ENCODE measurements at regions of chr6 and their contacts with region 1.

Region 1: DNA sequence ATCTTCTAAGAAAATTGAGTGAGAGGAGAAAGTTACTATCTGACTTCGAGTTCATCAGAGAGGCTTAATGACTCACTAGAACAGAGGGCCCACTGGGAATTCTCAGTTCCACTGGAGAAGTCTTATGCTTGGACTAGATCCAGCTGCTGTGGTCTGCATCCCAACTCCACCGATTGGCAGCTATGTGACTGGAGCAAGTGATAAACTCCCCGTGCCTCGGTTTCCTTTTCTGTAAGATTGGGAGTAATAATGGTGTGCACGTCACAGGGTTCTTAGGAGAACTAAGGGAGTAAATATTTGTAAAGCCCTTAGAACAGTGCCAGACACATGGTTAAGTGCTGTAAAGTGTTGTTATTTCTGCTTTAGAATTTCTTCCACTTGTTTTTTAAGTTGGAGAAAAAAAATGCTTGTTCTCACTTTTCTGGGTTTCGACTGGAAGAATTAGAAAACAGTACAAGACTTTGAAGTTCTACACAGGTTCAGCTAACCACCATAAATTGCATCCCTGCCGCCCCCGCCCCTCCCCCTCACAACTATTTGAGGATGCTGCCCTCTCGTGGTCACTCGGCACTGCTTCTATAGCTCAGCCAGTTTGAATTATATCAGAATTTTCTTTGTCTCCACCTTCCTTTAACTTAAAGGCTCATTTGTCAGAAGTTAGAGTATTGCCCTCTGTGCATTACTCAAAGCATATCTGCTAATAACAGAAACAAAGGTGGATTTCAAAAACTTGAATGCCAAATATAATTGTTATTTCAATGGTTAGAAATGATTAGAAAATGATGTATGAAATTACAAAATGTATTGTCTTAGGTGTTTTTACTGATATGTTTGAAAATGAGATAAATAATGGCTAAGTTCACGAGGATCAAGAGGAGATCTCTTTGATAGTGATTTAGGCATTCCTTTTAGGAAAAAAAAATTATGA is 95.0 kb upstream of the IFNGR1 start:
- DNase-seq: peak in 3 of 4 donors; percentile 46 to 72 (median 67)
- ATAC-seq: peak; percentile 95
- H3K4me3 ChIP-seq: no peak overlapping the region
- H3K27ac ChIP-seq: no peak overlapping the region
- H3K4me1 ChIP-seq: peaks cover 9 to 29% of the 10 kb centered on the region in 2 donors
- H3K27me3 ChIP-seq: no peaks in the 10 kb centered on the region
- CTCF ChIP-seq: peak; percentile 61 to 71

Region 2: GRCh38 chr6:137094411-137095008 is 219.7 kb before region 1 on chr6:
- intact Hi-C with region 1: loop called in 1 of 2 experiments (anchors 10 kb)
- DNase-seq: peak in 2 of 4 donors; percentile 51 to 77
- ATAC-seq: peak; percentile 88
- H3K4me3 ChIP-seq: no peak overlapping the region
- H3K27ac ChIP-seq: no peak overlapping the region
- H3K4me1 ChIP-seq: peaks cover 0 to 11% of the 10 kb centered on the region in 2 donors
- H3K27me3 ChIP-seq: no peaks in the 10 kb centered on the region
- CTCF ChIP-seq: peak; percentile 63 to 72

Region 3: DNA sequence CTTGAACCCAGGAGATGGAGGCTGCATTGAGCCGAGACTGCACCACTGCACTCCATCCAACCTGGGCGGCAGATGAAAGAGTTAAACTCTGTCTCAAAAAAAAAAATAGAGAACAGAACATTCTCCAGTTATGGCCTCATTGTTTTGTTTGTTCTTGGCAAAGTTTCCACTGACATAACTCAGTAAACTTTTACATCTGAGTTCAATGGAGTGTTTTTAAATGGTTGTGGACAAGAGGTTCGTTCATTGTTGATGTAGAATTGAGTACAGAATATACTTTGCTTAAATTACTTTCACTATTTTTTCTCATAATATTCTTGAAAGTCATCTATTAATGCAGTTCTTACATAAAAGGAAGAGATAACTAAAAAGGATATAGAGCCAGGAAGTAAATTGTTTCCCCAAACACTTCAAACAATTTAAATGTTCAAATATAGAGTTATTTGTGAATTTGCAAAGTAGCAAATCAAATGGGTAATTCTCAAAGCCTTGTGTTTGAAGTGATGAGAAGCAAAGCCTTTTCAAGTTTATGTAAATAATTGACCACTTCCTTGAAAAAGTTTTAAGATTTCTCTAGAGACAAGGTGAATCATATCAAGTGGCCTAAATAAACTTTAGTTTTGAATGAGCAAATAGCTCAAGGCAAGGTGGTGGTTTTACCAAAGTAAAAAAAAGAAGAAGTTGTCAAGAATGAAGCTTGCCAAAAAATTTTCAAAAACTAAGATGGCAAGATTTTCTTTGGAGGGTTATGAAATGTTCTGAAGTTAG is 52.6 kb before region 1 on chr6:
- intact Hi-C with region 1: no loop called
- DNase-seq: peak in 2 of 4 donors; percentile 20 to 38
- ATAC-seq: peak; percentile 62
- H3K4me3 ChIP-seq: no peak overlapping the region
- H3K27ac ChIP-seq: peak overlapping the region; percentile 40 to 57
- H3K4me1 ChIP-seq: peaks cover 0 to 57% of the 10 kb centered on the region in 2 donors
- H3K27me3 ChIP-seq: no peaks in the 10 kb centered on the region
- CTCF ChIP-seq: no peak